MCF 10A (cell line): ENCODE measurements at regions of chr20 and their contacts with region 1.

Region 1: GRCh38 chr20:1503564-1504227 is 12.5 kb upstream of the SIRPB2 start:
- DNase-seq: peak; percentile 92
- H3K4me3 Mint-ChIP-seq: no peak overlapping the region
- H3K27ac Mint-ChIP-seq: peak overlapping the region; percentile 32
- H3K4me1 Mint-ChIP-seq: peaks cover 52% of the 10 kb centered on the region
- H3K27me3 Mint-ChIP-seq: no peaks in the 10 kb centered on the region
- CTCF ChIP-seq: peak; percentile 99

Region 2: GRCh38 chr20:1325173-1326030 is 178.3 kb before region 1 on chr20:
- CTCF ChIA-PET with region 1: interaction called, 40 read pairs
- POLR2A ChIA-PET with region 1: interaction called, 21 read pairs
- intact Hi-C with region 1: no loop called
- DNase-seq: peak; percentile 95
- H3K4me3 Mint-ChIP-seq: no peak overlapping the region
- H3K27ac Mint-ChIP-seq: no peak overlapping the region
- H3K4me1 Mint-ChIP-seq: peaks cover 26% of the 10 kb centered on the region
- H3K27me3 Mint-ChIP-seq: no peaks in the 10 kb centered on the region
- CTCF ChIP-seq: no peak

Region 3: DNA sequence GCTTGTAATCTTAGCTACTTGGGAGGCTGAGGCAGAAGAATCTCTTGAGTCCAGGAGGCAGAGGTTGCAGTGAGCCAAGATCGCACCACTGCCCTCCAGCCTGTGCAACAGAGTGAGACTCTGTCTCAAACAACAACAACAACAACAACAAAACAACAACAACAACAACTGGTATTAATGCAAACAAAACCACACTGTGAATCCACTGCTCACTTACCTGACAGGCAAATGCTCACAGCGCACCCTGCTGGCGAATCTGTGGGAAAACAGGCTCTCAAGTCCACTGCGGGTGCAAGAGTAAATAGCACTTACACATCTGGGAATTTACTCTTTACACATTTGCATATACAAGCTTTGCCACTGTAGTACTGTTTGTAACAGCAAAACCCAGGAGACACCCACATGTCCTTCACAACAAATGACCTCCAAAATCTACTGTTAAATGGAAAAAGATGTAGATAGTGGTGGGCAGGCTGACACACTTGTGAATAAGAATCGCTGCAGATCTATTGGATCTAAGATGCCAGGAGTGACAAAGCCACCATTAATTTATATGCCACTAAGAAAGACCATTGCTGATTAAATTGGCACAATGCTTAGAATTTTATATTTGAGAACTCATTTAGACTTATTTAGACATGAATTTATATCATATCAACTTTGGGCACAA is 66.3 kb before region 1 on chr20:
- CTCF ChIA-PET with region 1: interaction called, 63 read pairs
- POLR2A ChIA-PET with region 1: interaction called, 7 read pairs
- intact Hi-C with region 1: loop called (anchors 1 kb)
- DNase-seq: peak; percentile 84
- H3K4me3 Mint-ChIP-seq: no peak overlapping the region
- H3K27ac Mint-ChIP-seq: no peak overlapping the region
- H3K4me1 Mint-ChIP-seq: peaks cover 10% of the 10 kb centered on the region
- H3K27me3 Mint-ChIP-seq: no peaks in the 10 kb centered on the region
- CTCF ChIP-seq: peak; percentile 89

Region 4: DNA sequence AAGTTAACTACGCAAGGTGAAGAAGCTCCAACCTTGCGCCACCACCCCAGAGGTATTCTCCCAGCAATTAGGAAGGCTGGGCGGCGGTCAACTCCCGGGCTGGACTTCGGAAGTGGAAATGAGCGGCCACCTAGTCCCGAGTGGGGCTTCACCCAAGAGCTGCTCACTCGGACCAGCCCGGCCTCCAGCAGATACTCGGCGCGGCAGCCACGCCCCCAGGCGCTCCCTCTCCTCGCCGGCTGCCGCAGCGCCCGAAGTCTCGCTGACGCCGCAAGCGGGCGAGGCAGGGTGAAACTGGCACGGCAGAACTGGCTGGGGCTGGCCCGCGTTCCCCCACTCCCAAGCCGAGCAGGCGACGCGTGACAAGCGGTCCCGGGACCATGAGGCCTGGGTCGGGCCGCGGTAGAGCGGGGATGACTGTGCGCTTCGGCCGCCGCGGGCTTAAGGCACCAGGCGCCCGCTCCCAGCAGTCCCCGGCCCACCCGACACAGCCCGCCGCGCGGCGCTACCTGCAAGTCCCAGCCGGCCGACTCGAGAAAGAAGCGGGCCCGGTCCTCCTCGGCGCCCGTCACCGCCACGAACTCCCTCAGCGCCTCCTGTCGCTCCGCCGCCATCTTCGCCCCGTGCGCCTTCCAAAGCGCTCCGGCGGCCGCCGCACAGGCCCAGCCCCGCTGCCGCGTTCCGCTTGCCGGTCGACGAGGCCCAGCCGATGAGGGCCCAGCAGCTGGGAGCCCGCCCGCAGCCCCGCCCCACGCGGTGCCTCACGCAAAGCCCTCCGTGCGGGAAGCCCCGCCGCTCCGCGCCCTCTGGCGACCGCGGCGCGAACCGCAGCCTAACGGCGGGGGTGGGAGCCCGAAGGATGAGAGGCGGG is 37.2 kb before region 1 on chr20 and contains the start of gene NSFL1C:
- CTCF ChIA-PET with region 1: interaction called, 615 read pairs
- POLR2A ChIA-PET with region 1: interaction called, 150 read pairs
- intact Hi-C with region 1: loop called (anchors 1 kb)
- DNase-seq: peak; percentile 91
- H3K4me3 Mint-ChIP-seq: peak within 1 kb of the TSS; percentile 78
- H3K27ac Mint-ChIP-seq: peak within 1 kb of the TSS; percentile 66
- H3K4me1 Mint-ChIP-seq: peaks cover 38% of the 10 kb centered on the region
- H3K27me3 Mint-ChIP-seq: no peaks in the 10 kb centered on the region
- CTCF ChIP-seq: peak; percentile 99
- total RNA-seq, gene NSFL1C: 63.3 and 76.1 TPM in 2 replicates

Region 5: DNA sequence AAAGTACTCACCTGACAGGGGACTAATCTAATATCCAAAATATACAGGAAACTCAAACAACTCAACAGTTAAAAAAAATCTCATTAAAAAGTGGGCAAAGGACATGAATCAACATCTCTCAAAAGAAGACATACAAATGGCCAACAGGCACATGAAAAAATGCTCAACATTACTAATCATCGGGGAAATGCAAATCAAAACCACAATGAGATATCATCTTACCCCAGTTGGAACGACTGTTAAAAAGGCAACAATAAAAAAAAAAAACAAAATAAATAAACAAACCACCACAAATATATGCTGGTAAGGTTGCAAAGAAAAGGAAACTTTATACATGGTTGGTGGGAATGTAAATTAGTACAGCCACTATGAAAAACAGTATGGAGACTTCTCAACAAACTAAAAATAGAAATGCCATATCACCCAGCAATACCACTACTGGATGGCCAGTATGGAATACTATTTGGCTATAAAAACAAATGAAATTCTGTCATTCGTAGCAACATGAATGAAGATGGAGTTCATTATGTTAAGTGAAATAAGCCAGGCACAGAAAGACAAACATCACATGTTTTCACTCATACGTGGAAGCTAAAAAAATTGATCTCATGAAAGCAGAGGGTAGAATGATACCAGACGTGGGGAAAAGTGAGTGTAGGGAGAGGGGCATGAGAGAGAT is 19.1 kb before region 1 on chr20:
- CTCF ChIA-PET with region 1: interaction called, 615 read pairs
- POLR2A ChIA-PET with region 1: interaction called, 108 read pairs
- intact Hi-C with region 1: no loop called
- DNase-seq: no peak
- H3K4me3 Mint-ChIP-seq: no peak overlapping the region
- H3K27ac Mint-ChIP-seq: no peak overlapping the region
- H3K4me1 Mint-ChIP-seq: peaks cover 26% of the 10 kb centered on the region
- H3K27me3 Mint-ChIP-seq: no peaks in the 10 kb centered on the region
- CTCF ChIP-seq: no peak

Region 6: GRCh38 chr20:1718604-1719384 is 215.1 kb after region 1 on chr20:
- CTCF ChIA-PET with region 1: interaction called, 15 read pairs
- POLR2A ChIA-PET with region 1: interaction called, 14 read pairs
- intact Hi-C with region 1: no loop called
- DNase-seq: peak; percentile 98
- H3K4me3 Mint-ChIP-seq: peak overlapping the region; percentile 4
- H3K27ac Mint-ChIP-seq: peak overlapping the region; percentile 37
- H3K4me1 Mint-ChIP-seq: peaks cover 22% of the 10 kb centered on the region
- H3K27me3 Mint-ChIP-seq: no peaks in the 10 kb centered on the region
- CTCF ChIP-seq: no peak

Region 7: DNA sequence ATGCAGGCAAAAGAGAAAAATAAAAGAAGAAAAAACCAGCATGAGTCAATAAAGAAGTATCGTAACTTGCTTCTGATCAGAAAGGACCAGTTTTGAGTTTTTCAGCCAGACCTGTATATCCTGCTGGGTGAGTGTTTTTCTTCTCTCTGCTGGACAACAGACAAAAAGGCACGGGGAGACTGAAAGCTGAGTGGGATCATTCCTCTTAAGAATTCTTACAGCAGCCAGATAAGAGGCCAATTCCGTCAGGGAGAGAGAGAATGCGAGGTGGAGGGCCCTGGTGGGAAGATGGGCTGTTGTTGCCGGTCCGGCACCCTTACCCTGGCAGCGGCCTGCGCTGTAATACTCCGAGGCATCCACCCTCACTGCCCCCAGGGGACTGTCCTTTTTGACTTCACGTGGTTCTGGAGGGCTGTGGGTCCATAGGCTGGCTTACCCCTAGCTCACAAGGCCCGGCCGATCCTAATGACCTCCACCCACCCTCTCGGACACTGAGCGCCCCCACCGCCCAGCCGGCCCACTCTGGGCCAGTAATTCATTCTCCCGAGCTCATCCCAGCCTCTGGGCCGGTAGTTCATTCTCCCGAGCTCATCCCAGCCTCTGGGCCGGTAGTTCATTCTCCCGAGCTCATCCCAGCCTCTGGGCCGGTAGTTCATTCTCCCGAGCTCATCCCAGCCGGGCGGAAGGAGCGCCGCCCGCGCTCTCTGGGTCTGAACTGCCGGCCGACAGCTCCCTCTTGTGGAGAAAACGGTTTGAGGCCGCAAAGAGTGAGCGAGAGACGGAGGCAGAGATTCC is 273.2 kb after region 1 on chr20:
- CTCF ChIA-PET with region 1: interaction called, 48 read pairs
- POLR2A ChIA-PET with region 1: interaction called, 12 read pairs
- intact Hi-C with region 1: no loop called
- DNase-seq: peak; percentile 87
- H3K4me3 Mint-ChIP-seq: peak overlapping the region; percentile 84
- H3K27ac Mint-ChIP-seq: peak overlapping the region; percentile 89
- H3K4me1 Mint-ChIP-seq: peaks cover 18% of the 10 kb centered on the region
- H3K27me3 Mint-ChIP-seq: peaks cover 14% of the 10 kb centered on the region
- CTCF ChIP-seq: peak; percentile 75